Calu3 (cell line): ENCODE measurements at regions of chr5 and their contacts with region 1.

Region 1: DNA sequence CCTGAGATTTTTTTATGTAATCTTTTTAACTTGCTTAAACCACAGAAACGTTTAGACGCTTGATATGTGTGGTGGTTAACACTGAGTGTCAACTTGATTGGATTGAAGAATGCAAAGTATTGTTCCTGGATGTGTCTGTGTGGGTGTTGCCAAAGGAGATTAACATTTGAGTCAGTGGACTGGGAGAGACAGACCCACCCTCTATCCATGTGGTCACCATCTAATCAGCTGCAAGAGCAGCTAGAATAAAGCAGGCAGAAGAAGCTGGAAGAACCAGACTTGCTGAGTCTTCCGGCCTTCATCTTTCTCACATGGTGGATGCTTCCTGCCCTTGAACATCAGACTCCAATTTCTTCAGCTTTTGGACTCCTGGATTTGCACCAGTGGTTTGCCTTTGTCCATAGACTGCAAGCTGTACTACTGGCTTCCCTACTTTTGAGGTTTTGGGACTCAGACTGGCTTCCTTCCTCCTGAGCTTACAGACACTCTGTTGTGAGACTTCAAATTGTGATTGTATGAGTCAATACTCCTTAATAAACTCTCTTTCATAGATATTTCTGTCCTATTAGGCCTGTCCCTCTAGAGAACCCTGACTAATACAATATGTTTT is 816.0 kb upstream of the CDH9 start:
- DNase-seq: peak; percentile 46
- H3K4me3 Mint-ChIP-seq: peak overlapping the region; percentile 15
- H3K27ac Mint-ChIP-seq: peak overlapping the region; percentile 70
- H3K4me1 Mint-ChIP-seq: peaks cover 12% of the 10 kb centered on the region
- H3K27me3 Mint-ChIP-seq: no peaks in the 10 kb centered on the region
- CTCF ChIP-seq: no peak

Region 2: DNA sequence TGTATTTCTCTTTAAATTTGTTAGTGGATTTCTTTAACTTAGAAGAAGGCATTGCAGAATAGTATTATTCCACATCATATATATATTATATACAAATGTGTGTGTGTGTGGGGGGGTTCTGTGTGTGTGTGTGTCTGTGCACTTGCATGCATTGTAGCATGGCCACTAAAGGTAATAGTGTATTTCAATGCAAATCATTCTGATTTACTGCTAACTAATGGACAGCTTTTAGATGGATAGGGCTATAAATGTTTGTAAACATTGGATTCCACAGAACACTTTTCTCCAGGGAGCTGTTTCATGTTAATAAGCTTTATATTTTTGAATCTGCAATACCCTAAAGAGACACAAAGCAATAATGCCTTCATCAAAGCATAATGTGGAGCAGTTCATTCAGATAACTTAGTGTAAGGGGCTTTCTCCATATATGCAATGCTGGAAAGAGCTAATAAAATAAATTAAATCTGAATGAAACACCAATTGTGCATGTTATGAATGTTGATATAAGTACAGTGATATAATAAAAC is 319.3 kb before region 1 on chr5:
- CTCF ChIA-PET with region 1: no interaction called
- intact Hi-C with region 1: no loop called
- DNase-seq: no peak
- H3K4me3 Mint-ChIP-seq: no peak overlapping the region
- H3K27ac Mint-ChIP-seq: no peak overlapping the region
- H3K4me1 Mint-ChIP-seq: no peaks in the 10 kb centered on the region
- H3K27me3 Mint-ChIP-seq: no peaks in the 10 kb centered on the region
- CTCF ChIP-seq: no peak

Region 3: GRCh38 chr5:27906911-27907590 is 52.7 kb after region 1 on chr5:
- CTCF ChIA-PET with region 1: no interaction called
- intact Hi-C with region 1: loop called (anchors 2 kb)
- DNase-seq: no peak
- H3K4me3 Mint-ChIP-seq: peak overlapping the region; percentile 6
- H3K27ac Mint-ChIP-seq: peak overlapping the region; percentile 69
- H3K4me1 Mint-ChIP-seq: peaks cover 28% of the 10 kb centered on the region
- H3K27me3 Mint-ChIP-seq: no peaks in the 10 kb centered on the region
- CTCF ChIP-seq: no peak

Region 4: DNA sequence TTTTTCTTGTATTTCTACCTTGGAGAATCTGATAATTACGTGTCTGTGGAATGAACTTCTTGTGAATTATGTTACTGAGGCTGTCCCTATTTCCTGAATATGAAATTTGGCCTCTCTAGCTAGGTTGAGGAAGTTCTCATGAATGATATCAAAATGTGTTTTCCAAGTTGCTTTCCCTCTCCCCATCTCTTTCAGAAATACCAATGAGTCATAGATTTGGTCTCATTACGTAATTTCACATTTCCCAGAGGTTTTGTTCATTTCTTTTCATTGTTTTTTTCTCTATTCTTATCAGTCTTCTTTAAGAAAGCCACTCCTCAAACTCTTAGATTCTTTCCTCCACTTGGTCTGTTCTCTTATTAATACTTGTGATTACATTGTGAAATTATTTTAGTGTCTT is 107.8 kb after region 1 on chr5:
- CTCF ChIA-PET with region 1: no interaction called
- intact Hi-C with region 1: loop called (anchors 10 kb)
- DNase-seq: no peak
- H3K4me3 Mint-ChIP-seq: no peak overlapping the region
- H3K27ac Mint-ChIP-seq: peak overlapping the region; percentile 78
- H3K4me1 Mint-ChIP-seq: peaks cover 21% of the 10 kb centered on the region
- H3K27me3 Mint-ChIP-seq: no peaks in the 10 kb centered on the region
- CTCF ChIP-seq: no peak